Astrocyte of the cerebellum (primary cell): ENCODE measurements at regions of chr6 and their contacts with region 1.

Region 1: GRCh38 chr6:105077596-105078385 is 102.0 kb downstream of the POPDC3 start:
- DNase-seq: peak; percentile 32
- H3K4me3 ChIP-seq: no peak overlapping the region
- CTCF ChIP-seq: peak; percentile 21

Region 2: DNA sequence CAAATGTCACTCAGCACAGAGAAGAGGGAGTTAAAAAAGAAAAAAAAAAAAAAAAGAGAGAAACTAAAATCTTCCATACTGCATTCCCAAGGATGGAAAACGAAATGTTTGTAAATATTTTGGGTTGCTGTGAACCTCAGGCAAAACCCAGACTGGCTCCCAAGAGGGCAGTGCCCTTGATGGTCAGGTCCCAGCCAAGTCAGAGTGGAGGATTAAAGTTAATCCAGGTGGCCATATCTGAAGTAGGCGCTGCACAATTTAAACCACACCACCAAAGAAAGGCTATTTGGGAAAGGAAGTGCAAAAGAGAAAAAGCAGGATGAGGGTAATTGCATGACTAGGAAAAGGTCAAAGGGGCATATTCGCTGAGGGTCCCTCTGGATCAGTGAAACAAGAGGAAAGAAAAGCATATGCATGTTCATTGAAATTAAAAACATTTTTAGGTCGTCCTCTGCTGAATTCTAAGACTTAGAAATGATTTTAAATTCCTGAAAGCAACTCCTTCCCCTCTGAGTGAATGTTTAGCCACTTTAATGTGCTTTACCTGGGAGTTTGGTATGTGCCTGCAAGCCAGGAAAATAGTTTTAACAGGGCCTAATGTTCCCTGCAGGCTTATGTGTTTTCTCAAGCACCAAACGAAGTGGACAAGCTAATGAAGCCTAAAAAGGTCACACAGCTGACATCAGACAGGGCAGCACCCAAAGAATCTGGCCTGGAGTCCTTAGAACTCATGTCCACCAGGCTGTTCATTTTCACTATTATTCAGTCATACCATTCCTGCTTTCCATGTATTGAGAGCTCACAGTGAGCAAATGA is 377.2 kb before region 1 on chr6:
- in situ Hi-C with region 1: no loop called
- DNase-seq: no peak
- H3K4me3 ChIP-seq: no peak overlapping the region
- CTCF ChIP-seq: no peak

Region 3: DNA sequence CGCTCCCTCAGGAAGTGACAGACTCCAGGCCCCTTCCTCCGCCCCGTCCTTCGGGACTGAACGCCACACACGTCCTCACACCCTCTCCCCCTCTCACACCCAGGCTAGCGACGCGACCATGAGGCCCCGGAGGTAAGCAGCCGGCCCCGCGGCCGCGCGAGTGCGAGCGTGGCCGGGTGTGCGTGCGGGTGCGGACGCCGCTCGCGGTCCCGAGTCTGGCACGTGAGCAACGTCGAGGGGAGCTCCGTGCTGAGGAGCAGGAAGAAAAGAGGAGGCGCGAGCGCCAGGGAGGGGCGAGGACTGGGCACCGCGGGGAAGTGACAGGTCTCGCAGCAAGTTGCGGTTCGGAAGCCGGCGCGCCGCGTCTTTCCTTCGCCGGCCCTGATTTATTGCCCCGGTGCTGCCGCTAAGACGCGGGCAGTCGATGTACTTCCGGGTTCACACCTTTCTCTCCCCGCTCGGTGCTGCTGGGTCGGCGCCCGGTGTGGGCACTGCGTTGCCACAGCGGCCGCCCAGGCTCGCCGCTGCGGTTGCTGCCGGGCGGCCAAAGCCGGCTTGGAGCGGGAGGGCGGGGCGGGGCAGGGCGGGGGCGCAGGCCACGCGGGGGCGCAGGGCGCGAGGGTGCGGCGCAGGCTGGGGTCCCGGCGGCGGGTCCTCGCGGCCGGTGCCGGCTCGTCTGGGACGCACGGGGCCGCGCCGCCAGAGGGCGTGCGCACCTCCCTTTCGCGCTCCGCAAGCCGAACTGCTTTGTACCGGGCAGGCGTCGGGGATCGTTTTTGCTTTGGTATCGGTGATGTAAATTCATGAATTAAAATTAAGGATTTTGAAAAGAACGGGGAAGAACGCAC is 136.7 kb before region 1 on chr6:
- in situ Hi-C with region 1: loop called (anchors 5 kb)
- DNase-seq: peak; percentile 3
- H3K4me3 ChIP-seq: peak overlapping the region; percentile 45
- CTCF ChIP-seq: peak; percentile 55